ENCODE measurements at regions of chr19 and their contacts with region 1.

Region 1: DNA sequence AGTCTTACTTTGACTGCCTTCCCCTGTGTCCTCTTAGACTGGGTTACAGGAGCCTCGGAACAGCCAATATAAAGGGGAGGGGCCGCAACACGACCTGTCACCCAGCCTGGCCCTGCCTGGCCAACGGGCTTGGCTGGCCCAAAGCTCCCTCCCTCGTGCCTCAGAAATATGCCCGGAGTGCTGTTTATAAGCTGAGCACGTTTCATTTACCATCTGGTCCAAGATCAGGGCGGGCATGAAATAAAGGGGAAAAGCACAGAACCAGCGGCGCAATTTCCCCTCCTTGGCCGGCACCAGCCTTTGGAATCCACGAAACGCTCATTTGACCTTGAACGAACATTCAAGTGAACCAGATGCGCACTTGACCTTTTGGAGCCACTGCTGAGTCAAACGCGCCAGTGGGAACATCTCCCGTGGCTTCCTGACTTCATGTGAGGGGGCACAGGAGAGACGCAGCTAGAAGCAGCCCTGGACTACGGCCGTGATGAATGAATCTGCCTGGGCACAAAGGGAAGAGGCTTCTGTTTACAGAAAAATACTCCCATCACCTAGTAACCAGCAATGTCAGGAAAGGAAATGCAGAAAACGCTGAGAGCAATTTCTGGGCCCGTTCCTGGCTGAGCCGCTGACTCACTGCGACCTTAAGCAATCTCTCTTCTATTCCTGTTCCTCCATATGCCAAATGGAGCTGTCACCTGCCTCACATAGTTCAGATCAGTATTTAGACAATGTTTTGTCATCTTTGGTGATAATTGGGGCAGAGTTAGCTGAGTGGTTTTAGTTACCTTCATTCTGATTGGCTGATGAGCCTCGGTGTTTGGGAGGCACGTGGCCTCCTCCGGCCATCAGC is 53.3 kb downstream of the RFX2 start:
- DNase-seq: peak; percentile 91 to 96
- H3K4me3 ChIP-seq: no peak overlapping the region
- CTCF ChIP-seq: no peak
- POLR2A ChIP-seq: no peak

Region 2: GRCh38 chr19:6110360-6110977 is 53.4 kb after region 1 on chr19 and contains the start of gene RFX2:
- intact Hi-C with region 1: loop called (anchors 5 kb)
- DNase-seq: peak; percentile 99 to 100
- H3K4me3 ChIP-seq: peak within 1 kb of the TSS; percentile 21
- CTCF ChIP-seq: no peak
- POLR2A ChIP-seq: no peak
- total RNA-seq, gene RFX2: 19.6 to 28.7 (median 25.8) TPM

Region 3: GRCh38 chr19:6279931-6280591 is 223.0 kb after region 1 on chr19 and contains the start of gene MLLT1:
- intact Hi-C with region 1: loop called (anchors 5 kb)
- DNase-seq: peak; percentile 93 to 99
- H3K4me3 ChIP-seq: peak within 1 kb of the TSS; percentile 57
- CTCF ChIP-seq: no peak
- POLR2A ChIP-seq: no peak
- total RNA-seq, gene MLLT1: 16.9 to 25.8 (median 24.3) TPM